Transverse colon (tissue), 4 donors: ENCODE measurements at regions of chr14 and their contacts with region 1.

Region 1: DNA sequence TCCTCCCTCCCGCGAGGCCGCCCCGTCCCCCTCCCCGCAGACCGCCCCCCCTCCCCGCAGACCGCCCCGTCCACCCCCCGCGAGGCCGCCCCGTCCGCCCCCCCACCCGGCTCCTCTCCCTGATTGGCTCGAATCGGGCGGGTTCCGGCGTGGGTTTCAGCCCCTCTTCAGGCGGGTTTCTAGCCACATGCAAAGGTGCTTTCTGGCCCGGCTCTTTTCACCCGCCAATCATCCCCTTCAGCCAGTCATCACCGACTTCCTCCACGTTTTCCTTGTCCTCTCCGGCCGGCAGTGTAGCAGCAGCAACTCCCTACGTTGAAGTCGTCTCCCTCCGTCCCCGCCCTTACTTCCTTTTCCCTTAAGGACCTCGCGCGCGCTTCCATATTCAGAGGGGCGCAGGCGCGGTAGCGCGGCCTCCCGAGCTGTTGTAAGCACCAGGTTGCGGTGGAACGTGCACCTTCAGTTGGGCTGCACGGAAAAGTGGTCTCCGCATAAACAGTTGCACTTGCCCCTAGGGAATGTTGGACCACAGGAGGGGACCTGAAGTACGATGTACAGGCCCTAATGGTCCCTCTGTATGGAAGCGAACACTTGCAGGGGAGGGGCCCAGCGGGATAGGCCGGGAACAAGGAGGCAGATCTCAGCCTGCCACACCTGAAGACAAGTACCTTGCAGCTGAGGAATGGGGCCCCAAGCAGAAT is 44.6 kb upstream of the ESR2 start:
- DNase-seq: peak; percentile 96
- H3K4me3 ChIP-seq: peak overlapping the region; percentile 55 to 80 (median 71)
- H3K27ac ChIP-seq: peak overlapping the region; percentile 86 to 95 (median 90)
- H3K4me1 ChIP-seq: peaks cover 0 to 12% (median 5%) of the 10 kb centered on the region in 4 donors
- H3K27me3 ChIP-seq: no peaks in the 10 kb centered on the region
- CTCF ChIP-seq: no peak
- EP300 ChIP-seq: no peak
- POLR2A ChIP-seq: peak; percentile 72

Region 2: GRCh38 chr14:64478634-64479250 is 140.0 kb after region 1 on chr14:
- in situ Hi-C with region 1: loop called in 3 of 4 experiments (anchors 10 to 25 kb)
- intact Hi-C with region 1: loop called (anchors 10 kb)
- DNase-seq: no peak
- H3K4me3 ChIP-seq: no peak overlapping the region
- H3K27ac ChIP-seq: no peak overlapping the region
- H3K4me1 ChIP-seq: no peaks in the 10 kb centered on the region
- H3K27me3 ChIP-seq: no peaks in the 10 kb centered on the region
- CTCF ChIP-seq: peak; percentile 35 to 47 (median 45)
- EP300 ChIP-seq: no peak
- POLR2A ChIP-seq: no peak